ENCODE measurements at regions of chr9 and their contacts with region 1.

Region 1: GRCh38 chr9:112002131-112002846 is 105.7 kb downstream of the UGCG start:
- DNase-seq: peak in 13 of 14 experiments; percentile 11 to 75 (median 26)
- ATAC-seq: peak; percentile 93
- H3K4me3 ChIP-seq: no peak overlapping the region
- H3K4me3 Mint-ChIP-seq: peak overlapping the region; percentile 16
- H3K27ac ChIP-seq: peak overlapping the region in 1 of 2 donors; percentile 56
- H3K27ac Mint-ChIP-seq: peak overlapping the region; percentile 82
- H3K4me1 ChIP-seq: peaks cover 44% of the 10 kb centered on the region
- H3K4me1 Mint-ChIP-seq: peaks cover 50% of the 10 kb centered on the region
- H3K27me3 ChIP-seq: no peaks in the 10 kb centered on the region
- H3K27me3 Mint-ChIP-seq: no peaks in the 10 kb centered on the region
- CTCF ChIP-seq: no peak

Region 2: GRCh38 chr9:111886983-111887711 is 115.1 kb before region 1 on chr9:
- CTCF ChIA-PET with region 1: no interaction called
- POLR2A ChIA-PET with region 1: no interaction called
- intact Hi-C with region 1: no loop called
- DNase-seq: no peak
- ATAC-seq: no peak
- H3K4me3 ChIP-seq: no peak overlapping the region
- H3K4me3 Mint-ChIP-seq: no peak overlapping the region
- H3K27ac ChIP-seq: no peak overlapping the region
- H3K27ac Mint-ChIP-seq: no peak overlapping the region
- H3K4me1 ChIP-seq: peaks cover 9% of the 10 kb centered on the region
- H3K4me1 Mint-ChIP-seq: peaks cover 9% of the 10 kb centered on the region
- H3K27me3 ChIP-seq: no peaks in the 10 kb centered on the region
- H3K27me3 Mint-ChIP-seq: no peaks in the 10 kb centered on the region
- CTCF ChIP-seq: no peak

Region 3: DNA sequence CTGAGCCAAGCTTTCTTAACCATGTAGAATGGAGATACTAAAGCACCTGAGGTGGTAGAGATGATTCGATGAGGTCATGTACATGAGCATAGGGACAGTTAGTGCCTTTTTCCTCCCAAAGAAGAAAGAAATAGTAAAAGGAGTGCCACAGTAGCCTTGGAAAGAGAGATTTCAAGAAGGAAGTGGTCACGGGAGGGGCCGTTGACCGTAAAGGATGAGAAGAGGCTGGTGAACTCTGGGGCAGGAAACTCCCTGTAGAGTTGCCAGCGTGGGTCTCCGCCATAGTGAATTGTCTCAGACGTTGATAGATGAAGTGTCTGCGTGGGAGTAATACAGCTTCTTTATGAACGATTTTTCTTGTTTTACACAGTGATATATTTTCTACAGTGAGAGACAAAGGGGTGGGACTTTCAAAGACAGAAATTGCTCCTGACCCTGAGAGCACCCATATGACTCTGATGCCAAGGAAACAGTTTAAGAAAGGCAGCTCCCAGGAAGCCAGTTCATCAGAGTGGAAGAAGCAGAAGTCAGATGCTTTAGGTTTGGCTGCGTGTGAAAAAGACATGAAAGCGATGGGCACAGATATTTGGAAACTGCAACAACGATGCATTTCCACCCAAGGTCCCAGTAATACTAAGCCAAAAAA is 64.4 kb before region 1 on chr9:
- CTCF ChIA-PET with region 1: no interaction called
- POLR2A ChIA-PET with region 1: interaction called, 20 read pairs
- intact Hi-C with region 1: loop called in 1 of 2 experiments (anchors 1 kb)
- DNase-seq: peak; percentile 20 to 84 (median 43)
- ATAC-seq: peak; percentile 94
- H3K4me3 ChIP-seq: peak overlapping the region; percentile 39
- H3K4me3 Mint-ChIP-seq: peak overlapping the region; percentile 53
- H3K27ac ChIP-seq: peak overlapping the region; percentile 34 to 64
- H3K27ac Mint-ChIP-seq: peak overlapping the region; percentile 87
- H3K4me1 ChIP-seq: peaks cover 20% of the 10 kb centered on the region
- H3K4me1 Mint-ChIP-seq: peaks cover 40% of the 10 kb centered on the region
- H3K27me3 ChIP-seq: no peaks in the 10 kb centered on the region
- H3K27me3 Mint-ChIP-seq: no peaks in the 10 kb centered on the region
- CTCF ChIP-seq: no peak

Region 4: DNA sequence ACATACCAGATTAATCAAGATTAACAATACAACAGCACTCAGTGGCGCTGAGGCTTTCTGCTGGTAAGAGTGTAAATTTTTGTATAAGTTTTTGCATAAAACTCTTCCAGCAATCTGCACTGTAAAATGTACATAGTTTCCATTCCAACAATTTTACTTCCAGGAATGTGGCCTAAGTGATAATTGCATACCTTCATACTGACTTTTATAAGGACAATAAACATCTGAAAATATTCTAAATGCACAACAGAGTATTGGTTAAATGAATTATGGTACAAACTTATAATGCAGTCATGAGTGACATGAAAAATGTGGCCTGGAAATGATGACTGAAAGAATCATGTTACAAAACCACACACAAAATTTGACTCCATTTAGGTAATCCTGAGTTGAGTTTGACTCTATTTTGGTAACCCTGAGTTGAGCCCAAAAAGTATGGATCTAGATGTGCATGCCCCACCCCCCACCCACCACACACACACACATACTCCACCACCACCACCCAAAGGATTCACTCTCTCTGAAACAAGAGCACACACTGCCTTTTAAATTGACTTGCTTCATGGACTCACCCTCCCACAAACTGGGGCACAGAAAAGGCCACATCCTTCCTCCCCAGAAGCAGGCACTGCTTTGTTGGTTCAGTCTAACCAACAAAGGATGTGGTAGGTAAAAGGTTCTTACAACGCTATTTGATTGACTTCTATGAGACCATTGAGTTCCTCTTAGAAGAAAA is 35.2 kb after region 1 on chr9:
- CTCF ChIA-PET with region 1: no interaction called
- POLR2A ChIA-PET with region 1: no interaction called
- intact Hi-C with region 1: loop called (anchors 2 to 5 kb)
- DNase-seq: peak; percentile 37 to 93 (median 62)
- ATAC-seq: peak; percentile 98
- H3K4me3 ChIP-seq: peak overlapping the region; percentile 9
- H3K4me3 Mint-ChIP-seq: peak overlapping the region; percentile 82
- H3K27ac ChIP-seq: no peak overlapping the region
- H3K27ac Mint-ChIP-seq: peak overlapping the region; percentile 68
- H3K4me1 ChIP-seq: peaks cover 54% of the 10 kb centered on the region
- H3K4me1 Mint-ChIP-seq: peaks cover 67% of the 10 kb centered on the region
- H3K27me3 ChIP-seq: no peaks in the 10 kb centered on the region
- H3K27me3 Mint-ChIP-seq: peaks cover 4% of the 10 kb centered on the region
- CTCF ChIP-seq: no peak